Posterior vena cava (tissue), 2 donors: ENCODE measurements at regions of chr10 and their contacts with region 1.

Region 1: GRCh38 chr10:56763090-56763489 is 402.0 kb upstream of the ZWINT start:
- DNase-seq: peak; percentile 62

Region 2: DNA sequence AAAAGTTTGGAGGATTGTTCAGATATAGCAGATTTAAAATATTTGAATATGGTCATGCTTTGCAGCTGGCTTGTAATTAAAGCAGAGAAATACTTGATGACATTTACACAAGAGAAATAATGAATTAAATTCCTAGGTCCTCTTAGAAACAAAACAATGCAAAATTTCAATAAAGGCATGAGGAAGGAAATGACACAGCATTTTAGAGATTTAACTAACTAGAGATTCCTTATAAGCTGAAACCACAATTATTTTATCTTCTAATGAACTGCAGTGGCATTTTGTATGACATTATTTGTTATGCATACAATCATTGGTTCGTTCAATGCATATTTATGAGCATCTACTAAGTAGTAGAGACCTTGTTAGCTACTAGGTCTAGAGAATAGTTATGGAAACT is 892.9 kb before region 1 on chr10:
- intact Hi-C with region 1: loop called in 1 of 2 experiments (anchors 5 kb)
- DNase-seq: no peak